Activated CD4-positive, alpha-beta memory T cell treated with anti-CD3 and anti-CD28 coated beads for 36 hours (primary cell): ENCODE measurements at regions of chr5 and their contacts with region 1.

Region 1: GRCh38 chr5:119022017-119022745 is 33.8 kb upstream of the DTWD2 start:
- DNase-seq: no peak
- H3K4me3 Mint-ChIP-seq: no peak overlapping the region
- H3K27ac Mint-ChIP-seq: no peak overlapping the region
- H3K4me1 Mint-ChIP-seq: no peaks in the 10 kb centered on the region
- H3K27me3 Mint-ChIP-seq: no peaks in the 10 kb centered on the region

Region 2: GRCh38 chr5:119255571-119256356 is 233.6 kb after region 1 on chr5:
- CTCF ChIA-PET with region 1: interaction called, 3 read pairs
- POLR2A ChIA-PET with region 1: no interaction called
- intact Hi-C with region 1: loop called (anchors 1 kb)
- DNase-seq: no peak
- H3K4me3 Mint-ChIP-seq: no peak overlapping the region
- H3K27ac Mint-ChIP-seq: no peak overlapping the region
- H3K4me1 Mint-ChIP-seq: peaks cover 4% of the 10 kb centered on the region
- H3K27me3 Mint-ChIP-seq: no peaks in the 10 kb centered on the region

Region 3: DNA sequence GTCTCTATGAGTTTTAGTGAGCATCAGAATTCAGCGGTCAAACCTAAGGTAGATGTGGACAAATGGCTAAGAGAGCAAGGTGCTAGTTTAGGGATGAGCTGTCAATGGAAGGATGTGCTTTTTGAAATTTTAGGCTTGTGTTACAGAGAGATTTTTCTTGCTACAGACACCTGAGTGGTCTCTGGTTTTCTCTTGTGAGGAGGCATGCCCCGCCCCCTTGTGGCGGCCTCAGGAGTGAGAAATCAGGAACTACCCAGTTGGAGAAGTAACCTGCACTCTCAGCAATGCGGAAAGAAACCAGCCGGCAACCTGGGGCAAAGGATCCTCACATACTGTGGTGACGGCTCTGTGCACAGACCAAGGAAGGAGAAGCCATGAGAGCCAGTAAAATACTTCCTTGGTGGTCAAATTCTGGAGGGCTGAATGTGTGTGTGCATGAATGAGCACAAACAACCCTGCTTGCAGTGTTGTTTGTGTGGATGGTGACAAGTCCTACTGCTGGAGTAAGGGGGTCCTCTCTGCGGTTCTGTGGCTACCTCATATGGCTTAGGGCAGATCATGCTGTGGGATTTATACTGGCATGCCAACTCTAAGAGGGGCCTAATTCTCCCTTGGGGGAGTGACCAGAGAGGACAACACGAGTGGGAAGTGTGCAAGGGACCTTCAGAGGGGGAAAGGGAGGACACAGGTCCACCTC is 413.4 kb after region 1 on chr5:
- CTCF ChIA-PET with region 1: interaction called, 4 read pairs
- POLR2A ChIA-PET with region 1: no interaction called
- intact Hi-C with region 1: loop called (anchors 1 kb)
- DNase-seq: peak; percentile 80
- H3K4me3 Mint-ChIP-seq: peak overlapping the region; percentile 3
- H3K27ac Mint-ChIP-seq: peak overlapping the region; percentile 4
- H3K4me1 Mint-ChIP-seq: peaks cover 7% of the 10 kb centered on the region
- H3K27me3 Mint-ChIP-seq: peaks cover 26% of the 10 kb centered on the region